K562 (cell line): ENCODE measurements at regions of chr3 and their contacts with region 1.

Region 1: DNA sequence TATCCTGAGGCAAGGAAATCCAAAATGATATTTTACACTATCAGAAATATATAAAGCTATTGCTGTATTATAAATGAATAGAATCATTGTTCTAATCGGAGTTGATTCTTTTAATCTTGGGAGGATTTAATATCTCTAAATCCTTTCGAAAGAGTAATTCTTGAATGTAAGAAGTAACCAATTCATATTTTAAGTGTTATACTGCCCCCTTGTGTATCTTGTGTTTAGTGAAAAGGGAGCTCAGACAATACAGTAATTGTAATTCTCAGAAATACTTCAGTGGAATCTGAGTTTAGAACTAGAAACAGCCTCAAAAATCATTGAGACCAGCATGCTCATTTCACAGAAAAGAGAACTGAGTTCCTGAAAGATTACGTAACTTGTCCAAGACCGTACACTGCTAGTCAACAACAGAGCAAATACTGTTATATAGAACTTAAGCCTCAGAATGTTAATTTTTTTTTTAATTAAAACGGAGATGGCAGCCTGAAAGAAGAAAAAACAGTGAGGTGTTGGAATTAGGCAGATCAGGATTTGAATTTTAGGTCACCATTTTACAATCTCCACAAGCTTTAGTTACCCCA is 42.9 kb downstream of the PLCH1 start:
- DNase-seq: peak; percentile 24 to 61 (median 29)
- ATAC-seq: peak; percentile 88
- H3K4me3 ChIP-seq: no peak overlapping the region
- H3K27ac ChIP-seq: no peak overlapping the region
- H3K4me1 ChIP-seq: no peaks in the 10 kb centered on the region
- H3K27me3 ChIP-seq: peaks cover 0 to under 1% of the 10 kb centered on the region in 2 experiments; a peak in 2 of 5 replicates
- CTCF ChIP-seq: peak in 2 of 3 experiments; percentile 49 to 76; a peak in 4 of 6 replicates
- EP300 ChIP-seq: no peak
- POLR2A ChIP-seq: no peak
- RAD21 ChIP-seq: peak; percentile 94 to 95

Region 2: GRCh38 chr3:154334973-154335420 is 1367.0 kb before region 1 on chr3:
- CTCF ChIA-PET with region 1: interaction called, 3 read pairs
- POLR2A ChIA-PET with region 1: no interaction called
- in situ Hi-C with region 1: no loop called
- intact Hi-C with region 1: loop called (anchors 10 kb)
- DNase-seq: peak in 3 of 4 experiments; percentile 20 to 32 (median 27)
- ATAC-seq: peak; percentile 70
- H3K4me3 ChIP-seq: no peak overlapping the region
- H3K27ac ChIP-seq: no peak overlapping the region
- H3K4me1 ChIP-seq: peaks cover 0 to 5% of the 10 kb centered on the region in 2 experiments; a peak in 2 of 5 replicates
- H3K27me3 ChIP-seq: no peaks in the 10 kb centered on the region; a peak in 1 of 5 replicates
- CTCF ChIP-seq: peak; percentile 11 to 59 (median 20); a peak in 3 of 6 replicates
- EP300 ChIP-seq: no peak
- POLR2A ChIP-seq: no peak
- RAD21 ChIP-seq: peak; percentile 30 to 41

Region 3: GRCh38 chr3:154758109-154758868 is 943.7 kb before region 1 on chr3:
- CTCF ChIA-PET with region 1: interaction called, 6 read pairs
- POLR2A ChIA-PET with region 1: no interaction called
- in situ Hi-C with region 1: no loop called
- intact Hi-C with region 1: loop called (anchors 5 kb)
- DNase-seq: peak in 1 of 4 experiments; percentile 16
- ATAC-seq: peak; percentile 69; the same call in 2 of the 3 replicates
- H3K4me3 ChIP-seq: no peak overlapping the region
- H3K27ac ChIP-seq: no peak overlapping the region
- H3K4me1 ChIP-seq: no peaks in the 10 kb centered on the region; a peak in 1 of 5 replicates
- H3K27me3 ChIP-seq: no peaks in the 10 kb centered on the region
- CTCF ChIP-seq: peak in 2 of 3 experiments; percentile 5 to 61; a peak in 3 of 6 replicates
- EP300 ChIP-seq: no peak
- POLR2A ChIP-seq: no peak
- RAD21 ChIP-seq: peak; percentile 72 to 88

Region 4: DNA sequence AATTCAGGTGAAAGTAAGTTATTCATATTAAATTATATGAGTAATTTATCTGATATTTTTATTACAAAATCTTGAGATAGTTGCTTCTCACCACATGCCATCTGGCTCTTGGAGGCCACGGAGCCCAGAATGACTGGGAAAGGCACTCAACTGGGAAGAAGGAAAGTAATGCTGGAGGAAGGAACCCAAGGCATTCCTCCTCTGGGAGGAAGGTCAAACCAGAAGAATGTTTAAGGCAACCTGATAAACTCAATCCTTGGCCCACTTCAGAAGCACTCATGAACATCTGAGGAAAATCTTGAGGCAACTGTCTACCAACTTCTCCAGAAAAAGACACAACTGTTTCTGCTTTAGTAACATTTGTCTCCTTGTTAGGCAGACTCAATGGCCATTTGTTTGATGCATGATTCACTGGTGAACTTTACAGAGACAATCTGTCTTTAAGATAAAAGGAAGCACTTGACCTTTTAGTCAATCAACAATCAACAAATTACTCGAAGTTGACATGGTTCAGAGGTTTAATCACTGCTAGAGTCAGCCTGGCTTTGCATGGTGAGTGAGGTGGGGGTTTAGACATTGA is 883.2 kb before region 1 on chr3:
- CTCF ChIA-PET with region 1: no interaction called
- POLR2A ChIA-PET with region 1: no interaction called
- in situ Hi-C with region 1: no loop called
- intact Hi-C with region 1: loop called (anchors 5 kb)
- DNase-seq: no peak
- ATAC-seq: no peak
- H3K4me3 ChIP-seq: no peak overlapping the region
- H3K27ac ChIP-seq: no peak overlapping the region
- H3K4me1 ChIP-seq: no peaks in the 10 kb centered on the region
- H3K27me3 ChIP-seq: no peaks in the 10 kb centered on the region
- CTCF ChIP-seq: no peak
- EP300 ChIP-seq: no peak
- POLR2A ChIP-seq: no peak
- RAD21 ChIP-seq: no peak

Region 5: DNA sequence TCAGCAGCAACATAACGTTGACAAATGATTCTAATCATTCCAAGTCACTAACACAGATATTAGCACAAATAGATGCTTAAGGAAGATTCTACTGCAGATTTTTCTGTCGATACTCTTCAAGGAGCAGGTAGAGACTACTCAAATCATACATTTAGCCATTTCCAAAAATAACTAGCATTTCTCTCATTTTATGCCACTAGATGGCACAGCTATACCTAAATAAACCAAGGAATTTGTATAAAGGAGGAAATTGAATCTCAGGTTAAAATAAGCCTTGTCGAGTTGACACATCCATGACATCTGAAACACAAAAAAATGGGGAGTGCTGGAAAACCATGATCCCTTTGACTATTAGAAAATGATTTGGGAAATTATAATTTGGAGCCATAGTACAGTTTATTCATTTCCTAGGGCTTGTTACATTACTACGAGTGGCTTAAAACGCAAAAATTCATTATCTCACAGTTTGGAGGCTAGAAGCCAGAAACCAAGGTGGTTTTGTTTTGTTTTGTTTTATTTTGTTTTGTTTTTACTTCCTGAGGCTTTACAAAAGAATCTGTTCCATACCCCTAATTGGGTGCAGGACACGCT is 349.0 kb before region 1 on chr3:
- CTCF ChIA-PET with region 1: interaction called, 19 read pairs
- POLR2A ChIA-PET with region 1: no interaction called
- in situ Hi-C with region 1: no loop called
- intact Hi-C with region 1: loop called (anchors 1 kb)
- DNase-seq: peak in 2 of 4 experiments; percentile 42 to 52
- ATAC-seq: peak; percentile 74
- H3K4me3 ChIP-seq: no peak overlapping the region
- H3K27ac ChIP-seq: no peak overlapping the region
- H3K4me1 ChIP-seq: no peaks in the 10 kb centered on the region; a peak in 1 of 5 replicates
- H3K27me3 ChIP-seq: no peaks in the 10 kb centered on the region
- CTCF ChIP-seq: peak; percentile 41 to 75 (median 47); a peak in 4 of 6 replicates
- EP300 ChIP-seq: no peak
- POLR2A ChIP-seq: no peak
- RAD21 ChIP-seq: peak; percentile 77 to 81

Region 6: GRCh38 chr3:155382396-155383042 is 319.5 kb before region 1 on chr3:
- CTCF ChIA-PET with region 1: interaction called, 25 read pairs
- POLR2A ChIA-PET with region 1: no interaction called
- in situ Hi-C with region 1: no loop called
- intact Hi-C with region 1: loop called (anchors 1 kb)
- DNase-seq: peak; percentile 64 to 85 (median 70)
- ATAC-seq: peak; percentile 99
- H3K4me3 ChIP-seq: no peak overlapping the region
- H3K27ac ChIP-seq: no peak overlapping the region
- H3K4me1 ChIP-seq: no peaks in the 10 kb centered on the region
- H3K27me3 ChIP-seq: peaks cover under 1 to 7% of the 10 kb centered on the region in 2 experiments; a peak in 3 of 5 replicates
- CTCF ChIP-seq: peak; percentile 79 to 89 (median 83)
- EP300 ChIP-seq: no peak
- POLR2A ChIP-seq: no peak
- RAD21 ChIP-seq: peak; percentile 94 to 95